Uterus (tissue), 4 donors: ENCODE measurements at regions of chr17 and their contacts with region 1.

Region 1: DNA sequence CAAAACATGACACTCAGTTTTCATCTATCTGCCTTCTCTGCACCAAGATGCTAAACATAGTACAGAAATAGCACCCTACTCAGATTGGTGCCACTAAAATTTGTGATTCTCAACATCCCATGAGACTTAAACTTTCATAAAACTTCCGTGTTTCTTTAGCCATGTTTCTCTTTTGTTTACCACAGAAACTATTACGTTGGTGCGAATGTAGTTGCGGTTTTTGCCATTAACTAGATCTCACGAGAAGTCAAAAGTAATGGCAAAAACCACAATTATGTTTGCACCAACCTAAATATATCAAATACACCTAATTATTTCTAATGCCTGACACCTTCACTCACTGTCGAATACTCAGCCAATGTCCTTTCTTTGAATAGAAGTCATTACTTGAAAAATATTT is 261.1 kb downstream of the KIF2B start:
- DNase-seq: no peak
- H3K4me3 ChIP-seq: no peak overlapping the region
- H3K27ac ChIP-seq: no peak overlapping the region
- H3K4me1 ChIP-seq: no peaks in the 10 kb centered on the region
- H3K27me3 ChIP-seq: no peaks in the 10 kb centered on the region
- CTCF ChIP-seq: no peak
- POLR2A ChIP-seq: no peak

Region 2: GRCh38 chr17:54124456-54124855 is 40.6 kb after region 1 on chr17:
- intact Hi-C with region 1: loop called (anchors 10 kb)
- DNase-seq: no peak
- H3K4me3 ChIP-seq: no peak overlapping the region
- H3K27ac ChIP-seq: no peak overlapping the region
- H3K4me1 ChIP-seq: no peaks in the 10 kb centered on the region
- H3K27me3 ChIP-seq: no peaks in the 10 kb centered on the region
- CTCF ChIP-seq: no peak
- POLR2A ChIP-seq: no peak

Region 3: GRCh38 chr17:54269881-54270280 is 186.0 kb after region 1 on chr17:
- intact Hi-C with region 1: no loop called
- DNase-seq: no peak
- H3K4me3 ChIP-seq: no peak overlapping the region
- H3K27ac ChIP-seq: no peak overlapping the region
- H3K4me1 ChIP-seq: no peaks in the 10 kb centered on the region
- H3K27me3 ChIP-seq: no peaks in the 10 kb centered on the region
- CTCF ChIP-seq: no peak
- POLR2A ChIP-seq: no peak